ENCODE measurements at regions of chr2 and their contacts with region 1.

Region 1: DNA sequence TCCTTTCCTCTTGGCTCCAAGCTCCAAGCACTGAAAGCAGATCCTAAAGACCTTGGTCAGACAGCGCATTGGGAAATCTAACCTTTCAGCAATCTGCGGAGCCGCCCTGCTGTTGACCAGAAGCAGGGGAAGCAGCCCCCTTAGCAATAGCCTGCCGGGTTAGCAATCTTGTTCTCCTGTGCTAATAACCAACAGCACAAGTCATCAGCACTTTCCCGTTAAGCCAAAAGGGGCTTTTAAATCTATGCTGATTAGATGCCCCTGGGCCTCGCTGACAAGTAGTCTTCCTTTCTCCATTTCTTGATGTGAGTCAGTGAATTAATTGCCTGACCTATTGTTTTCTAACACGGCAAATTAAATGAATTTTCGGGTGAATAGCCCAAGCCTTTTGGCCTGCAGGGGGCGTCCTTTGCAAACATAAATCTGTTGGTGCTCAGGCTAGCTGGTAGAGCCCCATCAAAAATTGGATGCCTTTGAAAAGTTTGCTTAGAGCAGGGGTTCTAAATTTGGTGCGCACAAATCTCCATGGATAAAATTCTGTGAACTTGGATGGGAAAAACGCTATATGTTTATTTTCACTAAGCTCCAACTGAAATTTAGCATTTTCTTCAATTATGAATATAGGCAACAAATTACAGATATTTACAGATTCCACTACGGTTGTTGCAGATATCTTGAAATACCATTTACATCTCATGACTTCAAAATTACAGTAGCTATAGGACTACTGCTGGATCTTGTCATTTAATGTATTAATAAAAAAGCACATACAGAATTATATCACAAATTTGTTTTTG is 24.6 kb downstream of the MAIP1 start:
- DNase-seq: peak; percentile 92
- H3K4me3 Mint-ChIP-seq: no peak overlapping the region
- H3K27ac Mint-ChIP-seq: peak overlapping the region; percentile 14
- H3K4me1 Mint-ChIP-seq: peaks cover 22% of the 10 kb centered on the region
- H3K27me3 Mint-ChIP-seq: no peaks in the 10 kb centered on the region

Region 2: DNA sequence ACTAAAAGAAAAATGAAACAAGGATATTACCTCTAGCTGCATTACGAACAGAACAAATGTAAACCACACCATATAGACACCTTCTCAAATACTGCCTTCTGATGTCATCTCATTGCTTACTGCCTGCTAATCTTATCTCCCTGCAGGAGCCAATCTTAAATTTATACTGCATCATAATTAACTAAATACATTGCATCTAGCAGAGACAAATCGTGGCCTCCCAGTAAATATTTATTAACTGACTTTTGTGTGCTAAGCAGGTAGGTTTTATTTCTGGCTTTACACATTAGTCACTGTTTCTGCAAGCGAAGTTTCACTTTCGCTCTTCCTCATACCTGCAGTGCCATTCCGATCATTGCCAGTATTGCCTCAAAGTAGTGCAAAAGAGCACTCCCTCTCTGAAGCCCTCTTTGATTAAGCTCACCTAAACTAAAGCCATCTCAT is 394.0 kb after region 1 on chr2:
- CTCF ChIA-PET with region 1: interaction called, 3 read pairs
- intact Hi-C with region 1: loop called (anchors 1 kb)
- DNase-seq: peak; percentile 66
- H3K4me3 Mint-ChIP-seq: peak overlapping the region; percentile 73
- H3K27ac Mint-ChIP-seq: peak overlapping the region; percentile 70
- H3K4me1 Mint-ChIP-seq: peaks cover 40% of the 10 kb centered on the region
- H3K27me3 Mint-ChIP-seq: no peaks in the 10 kb centered on the region

Region 3: GRCh38 chr2:200405599-200406298 is 425.7 kb after region 1 on chr2:
- CTCF ChIA-PET with region 1: no interaction called
- intact Hi-C with region 1: loop called (anchors 1 kb)
- DNase-seq: no peak
- H3K4me3 Mint-ChIP-seq: no peak overlapping the region
- H3K27ac Mint-ChIP-seq: peak overlapping the region; percentile 59
- H3K4me1 Mint-ChIP-seq: peaks cover 29% of the 10 kb centered on the region
- H3K27me3 Mint-ChIP-seq: no peaks in the 10 kb centered on the region

Region 4: GRCh38 chr2:200454927-200455801 is 475.1 kb after region 1 on chr2:
- CTCF ChIA-PET with region 1: no interaction called
- intact Hi-C with region 1: loop called (anchors 1 kb)
- DNase-seq: no peak
- H3K4me3 Mint-ChIP-seq: no peak overlapping the region
- H3K27ac Mint-ChIP-seq: peak overlapping the region; percentile 73
- H3K4me1 Mint-ChIP-seq: peaks cover 30% of the 10 kb centered on the region
- H3K27me3 Mint-ChIP-seq: no peaks in the 10 kb centered on the region

Region 5: GRCh38 chr2:200483729-200484198 is 503.7 kb after region 1 on chr2:
- CTCF ChIA-PET with region 1: interaction called, 43 read pairs
- intact Hi-C with region 1: loop called (anchors 1 kb)
- DNase-seq: peak; percentile 67
- H3K4me3 Mint-ChIP-seq: no peak overlapping the region
- H3K27ac Mint-ChIP-seq: no peak overlapping the region
- H3K4me1 Mint-ChIP-seq: peaks cover 2% of the 10 kb centered on the region
- H3K27me3 Mint-ChIP-seq: no peaks in the 10 kb centered on the region

Region 6: DNA sequence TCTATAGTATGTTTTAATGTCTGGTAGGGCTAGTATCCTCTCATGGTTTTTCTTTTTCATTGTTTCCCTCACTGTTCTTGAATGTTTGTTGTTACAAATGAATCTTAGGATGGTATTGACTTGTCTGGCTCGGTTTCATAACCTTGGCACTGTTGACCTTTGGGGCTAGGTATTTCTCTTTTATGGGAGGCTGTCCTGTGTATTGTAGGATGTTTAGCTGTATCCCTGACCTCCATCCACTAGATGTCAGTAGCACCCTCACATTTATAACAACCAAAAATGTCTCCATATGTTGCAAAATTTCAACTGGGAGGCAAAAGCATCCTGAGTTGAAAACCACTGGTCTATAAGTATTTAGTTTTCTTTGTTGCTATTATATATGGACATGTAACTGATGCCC is 598.7 kb after region 1 on chr2:
- CTCF ChIA-PET with region 1: no interaction called
- intact Hi-C with region 1: loop called (anchors 2 kb)
- DNase-seq: peak; percentile 18
- H3K4me3 Mint-ChIP-seq: no peak overlapping the region
- H3K27ac Mint-ChIP-seq: peak overlapping the region; percentile 16
- H3K4me1 Mint-ChIP-seq: peaks cover 14% of the 10 kb centered on the region
- H3K27me3 Mint-ChIP-seq: no peaks in the 10 kb centered on the region

Region 7: GRCh38 chr2:200735061-200735460 is 755.0 kb after region 1 on chr2:
- CTCF ChIA-PET with region 1: no interaction called
- intact Hi-C with region 1: loop called (anchors 1 kb)
- DNase-seq: peak; percentile 55
- H3K4me3 Mint-ChIP-seq: no peak overlapping the region
- H3K27ac Mint-ChIP-seq: no peak overlapping the region
- H3K4me1 Mint-ChIP-seq: peaks cover 13% of the 10 kb centered on the region
- H3K27me3 Mint-ChIP-seq: peaks cover 9% of the 10 kb centered on the region